ENCODE measurements at regions of chr11 and their contacts with region 1.

Region 1: DNA sequence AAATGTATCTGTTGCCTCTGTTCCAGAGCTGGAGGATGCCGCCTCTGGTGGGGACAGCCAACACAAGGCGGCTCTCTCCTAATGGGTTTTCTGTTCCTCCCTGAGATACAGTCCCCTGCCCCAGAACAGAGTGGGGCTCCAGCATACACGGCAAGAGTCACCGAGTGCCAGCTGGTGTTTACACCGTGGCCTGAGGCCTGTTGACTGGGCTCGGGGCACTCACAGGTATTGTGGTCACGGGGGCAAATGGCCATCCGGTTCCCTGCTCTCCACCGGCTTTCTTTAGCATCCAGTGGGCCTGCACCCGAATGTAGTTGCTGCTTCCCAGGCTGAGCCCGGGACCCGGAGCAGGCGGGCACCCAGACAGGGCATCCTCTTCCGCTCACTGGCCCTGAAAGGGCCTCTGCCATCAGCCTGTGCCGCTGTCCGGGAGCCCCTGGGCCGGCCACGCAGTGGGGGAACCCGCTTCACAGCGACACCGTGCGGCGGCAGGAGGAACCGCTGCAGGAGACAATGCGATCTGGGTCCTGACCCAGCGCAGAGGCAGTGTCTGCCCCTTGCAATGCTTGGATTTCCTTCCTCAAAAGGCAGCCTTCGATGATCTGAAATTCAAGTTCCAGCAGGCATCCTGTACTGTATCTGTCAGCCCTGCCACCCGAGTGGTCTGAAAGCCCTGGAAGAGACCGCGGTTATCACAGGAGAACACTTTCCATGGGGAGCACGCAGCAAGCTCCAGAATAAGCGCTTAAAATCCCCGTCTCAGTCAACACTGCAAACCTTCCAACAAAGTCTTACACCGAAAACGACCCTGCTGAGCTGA is 859 bp upstream of the KRTAP5-5 start:
- DNase-seq: no peak
- H3K4me3 ChIP-seq: no peak overlapping the region
- H3K27me3 ChIP-seq: peaks cover 20% of the 10 kb centered on the region
- CTCF ChIP-seq: peak; percentile 94

Region 2: GRCh38 chr11:975827-976226 is 652.9 kb before region 1 on chr11:
- CTCF ChIA-PET with region 1: no interaction called
- POLR2A ChIA-PET with region 1: no interaction called
- DNase-seq: no peak
- H3K4me3 ChIP-seq: no peak overlapping the region
- H3K27me3 ChIP-seq: no peaks in the 10 kb centered on the region
- CTCF ChIP-seq: peak; percentile 60

Region 3: GRCh38 chr11:1317432-1317831 is 311.3 kb before region 1 on chr11:
- CTCF ChIA-PET with region 1: no interaction called
- POLR2A ChIA-PET with region 1: no interaction called
- DNase-seq: no peak
- H3K4me3 ChIP-seq: no peak overlapping the region
- H3K27me3 ChIP-seq: no peaks in the 10 kb centered on the region; the same call in none of the 2 replicates
- CTCF ChIP-seq: no peak

Region 4: DNA sequence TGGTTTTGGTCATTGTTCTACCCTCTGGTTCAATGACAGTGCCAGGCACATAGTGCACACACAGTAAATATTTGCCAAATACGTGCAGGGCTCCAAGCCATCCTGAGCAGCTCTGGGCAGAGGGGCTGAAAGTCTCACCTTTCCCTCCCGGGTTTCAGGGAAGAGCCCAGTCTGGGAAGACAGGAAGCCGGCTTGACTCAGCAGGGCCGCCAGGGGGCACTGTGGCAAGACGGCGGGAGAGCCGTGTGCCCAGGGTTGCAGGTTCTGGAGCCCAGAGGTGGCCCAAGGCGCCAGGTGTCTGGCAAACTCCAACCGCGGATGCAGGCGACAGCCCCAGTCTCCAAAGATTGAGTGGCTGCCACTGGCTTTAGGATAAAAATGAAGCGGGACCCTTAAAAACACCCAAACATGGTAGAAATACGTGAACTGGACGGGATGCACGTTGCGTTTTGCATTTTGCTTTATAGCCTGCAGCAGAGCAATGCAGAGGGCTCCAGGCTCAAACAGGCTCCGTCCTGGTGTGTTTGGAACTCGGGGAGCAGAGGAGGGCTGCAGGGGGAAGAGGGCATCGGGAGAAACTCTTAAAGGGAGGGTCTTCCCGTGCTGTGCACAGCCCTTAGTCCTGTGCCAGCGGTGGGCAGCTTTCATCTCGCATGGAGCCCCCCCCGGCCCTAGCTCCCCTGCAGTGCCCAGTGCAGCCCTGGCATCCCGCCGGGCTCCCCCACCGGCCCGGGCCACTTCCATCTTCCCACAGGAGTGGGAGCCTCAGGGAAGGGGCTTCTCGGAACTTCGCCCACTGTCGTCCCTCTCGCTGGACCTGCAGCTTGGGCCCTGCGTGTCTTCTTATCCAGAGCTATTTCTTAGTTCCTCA is 11.6 kb after region 1 on chr11:
- CTCF ChIA-PET with region 1: interaction called, 65 read pairs
- POLR2A ChIA-PET with region 1: no interaction called
- DNase-seq: no peak
- H3K4me3 ChIP-seq: no peak overlapping the region
- H3K27me3 ChIP-seq: peaks cover 5% of the 10 kb centered on the region
- CTCF ChIP-seq: peak; percentile 86

Region 5: GRCh38 chr11:1659506-1659905 is 30.8 kb after region 1 on chr11:
- CTCF ChIA-PET with region 1: no interaction called
- POLR2A ChIA-PET with region 1: no interaction called
- DNase-seq: no peak
- H3K4me3 ChIP-seq: no peak overlapping the region
- H3K27me3 ChIP-seq: peaks cover 16% of the 10 kb centered on the region
- CTCF ChIP-seq: no peak

Region 6: DNA sequence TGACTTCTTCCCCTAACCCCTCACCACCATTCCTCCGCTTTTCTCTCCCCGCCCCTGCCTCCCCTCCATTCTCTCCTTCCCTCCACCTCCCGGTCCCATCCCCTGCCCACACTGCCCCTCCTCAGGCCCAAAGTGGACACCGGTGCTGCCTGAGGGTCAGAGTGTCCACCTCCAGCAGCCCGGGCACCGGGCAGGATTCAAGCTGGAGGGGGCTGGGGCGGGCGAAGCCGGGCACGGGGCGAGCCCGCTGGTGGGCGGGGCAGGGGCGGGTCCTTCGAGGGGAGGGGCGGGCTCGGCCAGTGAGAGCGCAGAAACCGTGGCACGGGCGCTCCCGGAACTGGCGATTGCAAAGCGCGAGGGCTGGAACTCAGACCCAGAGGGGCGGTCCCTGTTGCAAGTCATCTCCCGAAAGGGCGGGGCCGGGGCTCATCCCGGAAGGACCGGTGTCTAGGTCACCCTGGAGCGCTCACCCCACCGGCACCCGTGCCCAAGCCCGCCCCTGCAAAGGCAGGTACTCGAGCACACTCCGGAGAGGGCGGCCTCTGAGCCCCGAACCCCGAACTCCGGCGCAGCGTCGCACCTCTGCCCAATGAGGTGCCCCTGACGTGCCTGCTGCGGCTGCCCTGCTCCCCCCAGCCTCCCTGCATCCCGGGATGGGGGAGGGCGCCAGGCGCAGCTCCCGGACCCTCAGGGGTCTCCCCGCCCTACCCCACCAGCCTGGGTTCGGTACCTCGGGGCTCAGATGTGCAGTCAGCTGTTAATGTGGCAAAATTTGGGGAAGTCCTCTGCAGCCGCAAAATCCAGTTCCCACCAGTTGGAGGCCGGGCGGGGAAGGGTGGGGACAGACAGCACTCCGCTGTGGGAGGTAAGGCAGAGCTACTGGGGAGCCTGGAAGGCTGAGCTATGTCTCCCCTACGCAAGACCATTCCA is 1273.4 kb after region 1 on chr11:
- CTCF ChIA-PET with region 1: no interaction called
- POLR2A ChIA-PET with region 1: interaction called, 13 read pairs
- DNase-seq: peak; percentile 58
- H3K4me3 ChIP-seq: peak overlapping the region; percentile 88
- H3K27me3 ChIP-seq: no peaks in the 10 kb centered on the region
- CTCF ChIP-seq: 0 out of 2 replicates have a peak, but pooled peaks have one; percentile 8